Ascending aorta (tissue), 2 donors: ENCODE measurements at regions of chr22 and their contacts with region 1.

Region 1: DNA sequence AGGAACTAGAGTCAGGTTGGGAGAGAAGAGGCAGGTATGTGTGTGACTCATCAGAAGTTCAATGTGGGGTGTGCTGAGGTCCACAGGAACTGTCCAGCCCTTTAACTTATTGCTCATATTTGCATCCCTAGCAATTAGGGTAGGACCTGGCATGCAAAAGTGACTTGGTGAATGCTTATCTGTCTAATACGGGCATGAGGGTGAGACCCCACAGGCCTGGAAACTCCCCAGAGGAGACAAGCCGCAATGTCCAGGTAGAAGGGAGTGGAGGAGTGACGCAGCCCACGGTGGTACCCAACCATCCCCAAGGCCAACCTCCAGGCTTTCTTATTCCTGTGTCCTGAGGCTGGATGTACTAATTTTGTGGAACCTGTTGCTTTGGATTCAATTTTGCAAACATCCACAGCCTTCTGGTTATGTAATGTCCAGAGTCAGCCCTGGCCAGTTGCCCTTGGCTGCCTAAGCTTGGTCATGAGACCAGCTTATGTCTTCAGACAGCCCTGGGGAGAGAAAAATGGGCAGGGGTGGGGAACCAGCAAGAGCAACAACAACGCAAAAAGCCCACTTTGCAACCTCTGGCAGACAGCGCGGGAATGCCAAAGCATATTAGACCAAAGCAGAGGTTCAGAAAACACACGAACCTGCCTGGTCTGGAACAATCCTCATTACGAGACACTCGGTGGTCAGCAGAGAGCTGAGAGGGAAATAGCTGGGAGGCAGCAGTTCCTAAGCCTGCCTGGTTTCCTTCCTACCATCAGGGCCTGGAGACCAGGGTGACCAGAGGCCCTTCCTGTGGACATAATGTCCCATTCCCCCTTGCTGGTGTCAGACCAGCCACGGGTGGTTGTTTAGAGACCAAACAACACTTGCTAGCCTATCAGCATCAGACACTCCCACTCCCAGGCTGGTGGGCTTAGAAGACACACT is 49.3 kb downstream of the TIMP3 start:
- DNase-seq: peak; percentile 58 to 91
- H3K4me3 ChIP-seq: peak overlapping the region in 1 of 2 donors; percentile 12
- H3K27ac ChIP-seq: peak overlapping the region; percentile 75 to 77
- H3K4me1 ChIP-seq: peaks cover 26 to 46% of the 10 kb centered on the region in 2 donors
- H3K27me3 ChIP-seq: no peaks in the 10 kb centered on the region
- CTCF ChIP-seq: no peak

Region 2: GRCh38 chr22:32622004-32622743 is 228.7 kb before region 1 on chr22:
- intact Hi-C with region 1: loop called (anchors 5 kb)
- DNase-seq: no peak
- H3K4me3 ChIP-seq: peak overlapping the region in 1 of 2 donors; percentile 17
- H3K27ac ChIP-seq: peak overlapping the region; percentile 69 to 75
- H3K4me1 ChIP-seq: peaks cover 6 to 44% of the 10 kb centered on the region in 2 donors
- H3K27me3 ChIP-seq: no peaks in the 10 kb centered on the region
- CTCF ChIP-seq: no peak

Region 3: GRCh38 chr22:32803020-32803754 is 47.7 kb before region 1 on chr22:
- intact Hi-C with region 1: loop called (anchors 2 kb)
- DNase-seq: peak in 1 of 2 donors; percentile 76
- H3K4me3 ChIP-seq: peak overlapping the region; percentile 74 to 91
- H3K27ac ChIP-seq: peak overlapping the region; percentile 69 to 75
- H3K4me1 ChIP-seq: peaks cover 0 to 8% of the 10 kb centered on the region in 2 donors
- H3K27me3 ChIP-seq: no peaks in the 10 kb centered on the region
- CTCF ChIP-seq: no peak

Region 4: DNA sequence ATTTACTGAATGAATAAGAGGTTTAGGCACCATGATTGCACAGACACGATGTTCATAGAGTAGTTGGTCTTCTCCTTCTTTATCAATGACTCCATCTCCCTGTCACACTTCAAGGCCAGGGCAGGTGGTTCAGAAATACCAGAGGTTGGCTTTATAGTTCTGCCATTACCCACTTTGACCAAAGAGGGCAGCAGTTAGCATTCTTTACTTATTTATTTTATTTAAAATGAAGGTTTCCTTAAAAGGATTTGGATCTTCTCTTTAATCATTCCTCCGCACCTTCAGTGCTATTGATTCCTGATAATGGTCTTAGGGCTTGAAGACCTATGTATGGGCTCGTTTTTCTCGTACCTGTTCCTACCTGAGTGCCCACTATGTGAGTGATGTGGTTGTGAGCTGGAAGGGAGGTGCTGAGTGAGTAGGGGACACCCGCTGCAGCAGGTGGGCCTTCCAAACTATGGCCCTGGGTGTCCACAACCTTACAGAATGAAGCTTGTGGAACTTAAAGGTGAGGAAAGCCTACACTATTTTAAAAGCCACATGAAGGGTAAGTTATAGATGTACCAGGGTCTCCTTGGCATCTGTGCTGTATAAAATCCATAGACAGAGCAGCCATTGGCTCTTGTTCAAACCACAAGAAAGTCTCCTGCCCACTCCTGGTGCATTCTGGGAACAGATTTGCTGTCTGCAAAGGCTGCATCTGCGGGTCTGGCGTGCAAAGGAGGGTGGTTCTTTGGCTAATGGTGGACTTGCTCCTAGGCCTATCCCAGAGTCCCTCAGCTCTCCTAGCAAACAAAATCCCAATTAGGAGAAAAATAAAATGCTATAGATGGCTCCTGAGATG is 14.4 kb before region 1 on chr22:
- intact Hi-C with region 1: no loop called
- DNase-seq: no peak
- H3K4me3 ChIP-seq: no peak overlapping the region
- H3K27ac ChIP-seq: no peak overlapping the region
- H3K4me1 ChIP-seq: peaks cover 10 to 48% of the 10 kb centered on the region in 2 donors
- H3K27me3 ChIP-seq: no peaks in the 10 kb centered on the region
- CTCF ChIP-seq: peak; percentile 26 to 46 (median 43)